ENCODE measurements at regions of chr17 and their contacts with region 1.

Region 1: GRCh38 chr17:68296211-68297191 is 5.2 kb downstream of the ARSG start:
- DNase-seq: no peak
- H3K4me3 ChIP-seq: no peak overlapping the region
- H3K27ac ChIP-seq: no peak overlapping the region
- H3K4me1 ChIP-seq: peaks cover 7% of the 10 kb centered on the region
- H3K27me3 ChIP-seq: peaks cover 5% of the 10 kb centered on the region
- CTCF ChIP-seq: no peak

Region 2: GRCh38 chr17:68318103-68318991 is 21.8 kb after region 1 on chr17:
- CTCF ChIA-PET with region 1: interaction called, 14 read pairs
- dilution Hi-C with region 1: no loop called
- in situ Hi-C with region 1: no loop called
- intact Hi-C with region 1: no loop called
- DNase-seq: peak; percentile 48
- H3K4me3 ChIP-seq: no peak overlapping the region
- H3K27ac ChIP-seq: no peak overlapping the region
- H3K4me1 ChIP-seq: no peaks in the 10 kb centered on the region
- H3K27me3 ChIP-seq: no peaks in the 10 kb centered on the region
- CTCF ChIP-seq: no peak